Gastrocnemius medialis (tissue), 4 donors: ENCODE measurements at regions of chr7 and their contacts with region 1.

Region 1: DNA sequence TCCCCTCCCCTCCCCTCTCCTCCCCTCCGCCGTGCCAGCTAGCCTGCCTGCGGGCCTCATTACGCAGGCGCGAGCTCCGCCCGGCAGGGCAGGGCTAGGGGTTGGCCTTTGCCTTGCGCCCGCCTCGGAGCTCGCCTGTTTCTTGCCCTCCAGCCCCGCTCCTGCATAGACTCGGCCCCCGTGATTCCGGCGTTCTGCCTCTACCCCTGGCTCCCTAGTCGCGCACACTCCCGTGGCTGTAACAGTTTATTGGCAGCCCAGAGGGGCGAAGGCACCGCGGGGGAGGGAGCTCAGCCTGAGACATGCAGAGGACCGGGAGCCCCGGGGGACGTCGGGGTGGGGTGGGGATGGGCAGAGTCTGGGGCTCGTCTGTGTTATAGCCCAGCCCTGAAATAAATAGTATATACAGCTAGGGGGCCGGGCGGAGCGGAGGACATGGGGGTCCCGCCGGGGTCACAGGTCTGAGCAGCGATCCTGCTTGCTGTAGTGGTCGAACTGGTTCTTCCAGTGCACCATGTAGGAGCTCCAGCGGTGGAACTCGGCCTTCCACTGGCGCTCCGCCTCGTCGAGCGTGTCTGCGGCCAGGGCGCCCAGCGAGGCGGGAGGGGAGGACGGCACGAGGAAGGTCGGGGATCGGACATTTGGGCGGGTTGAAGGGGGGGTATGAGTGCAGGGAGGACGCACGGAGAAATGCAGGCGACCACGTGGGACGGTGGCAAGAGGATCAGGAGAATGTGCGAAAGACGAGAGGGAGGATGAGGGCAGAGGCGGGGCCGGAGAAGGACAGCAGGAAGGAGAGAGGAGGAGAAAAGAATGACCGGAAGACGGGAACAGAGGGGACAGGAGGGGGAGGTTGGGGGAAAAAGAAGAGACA is 483 bp upstream of the UFSP1 start:
- DNase-seq: peak; percentile 92
- ATAC-seq: peak; percentile 78 to 82
- H3K4me3 ChIP-seq: peak overlapping the region; percentile 69 to 89 (median 85)
- H3K27ac ChIP-seq: peak overlapping the region; percentile 95 to 99 (median 97)
- H3K4me1 ChIP-seq: peaks cover 28 to 49% of the 10 kb centered on the region in 2 donors
- H3K27me3 ChIP-seq: peaks cover 0 to under 1% (median 0%) of the 10 kb centered on the region in 3 donors
- CTCF ChIP-seq: peak in 1 of 5 experiments; percentile 10
- POLR2A ChIP-seq: peak; percentile 75 to 76

Region 2: DNA sequence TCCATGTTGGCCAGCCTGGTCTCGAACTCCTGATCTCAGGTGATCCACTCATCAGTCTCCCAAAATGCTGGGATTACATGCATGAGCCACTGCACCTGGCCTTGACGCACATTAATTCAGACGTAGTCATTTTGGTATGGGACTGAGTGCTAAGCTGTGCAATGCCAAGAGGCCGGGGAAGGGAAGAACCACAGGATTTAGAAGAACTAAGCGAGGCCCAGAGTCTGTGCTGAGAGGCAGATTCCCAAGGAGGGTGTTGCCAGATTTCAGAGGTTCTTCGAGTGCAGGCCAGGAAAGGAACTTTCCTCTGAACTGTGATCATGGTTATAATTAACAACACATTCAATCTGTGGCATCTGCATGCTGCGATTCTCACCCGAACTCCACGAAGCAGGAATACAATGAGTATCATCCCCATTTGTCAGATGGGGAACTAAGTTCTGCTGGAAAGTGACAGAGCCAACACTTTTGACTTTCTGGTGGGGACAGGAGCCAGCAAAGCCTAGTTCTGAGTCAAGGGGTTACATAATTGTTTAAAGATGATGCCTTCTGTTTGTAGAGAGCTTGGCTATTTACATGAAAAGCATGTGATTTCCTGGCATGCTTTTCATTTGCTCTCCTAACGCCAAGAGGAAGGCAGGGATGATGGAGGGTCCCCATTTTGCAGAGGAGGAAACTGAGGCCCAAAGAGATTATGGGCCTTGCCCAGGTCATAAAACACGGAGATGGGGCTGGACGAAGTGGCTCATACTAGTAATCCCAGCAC is 162.8 kb before region 1 on chr7:
- in situ Hi-C with region 1: no loop called
- intact Hi-C with region 1: no loop called
- DNase-seq: no peak
- ATAC-seq: no peak
- H3K4me3 ChIP-seq: no peak overlapping the region
- H3K27ac ChIP-seq: no peak overlapping the region
- H3K4me1 ChIP-seq: no peaks in the 10 kb centered on the region
- H3K27me3 ChIP-seq: peaks cover 0 to 7% (median 4%) of the 10 kb centered on the region in 3 donors
- CTCF ChIP-seq: no peak
- POLR2A ChIP-seq: no peak

Region 3: GRCh38 chr7:101085162-101085987 is 195.4 kb after region 1 on chr7 and contains the start of gene TRIM56:
- in situ Hi-C with region 1: no loop called
- intact Hi-C with region 1: loop called (anchors 2 kb)
- DNase-seq: peak; percentile 76 to 91
- ATAC-seq: peak; percentile 93 to 94
- H3K4me3 ChIP-seq: peak within 1 kb of the TSS; percentile 74 to 87 (median 76)
- H3K27ac ChIP-seq: peak within 1 kb of the TSS; percentile 90 to 94 (median 91)
- H3K4me1 ChIP-seq: peaks cover 15 to 18% of the 10 kb centered on the region in 2 donors
- H3K27me3 ChIP-seq: no peaks in the 10 kb centered on the region
- CTCF ChIP-seq: no peak
- POLR2A ChIP-seq: peak in 1 of 2 donors; percentile 59
- total RNA-seq, gene TRIM56: 4.2 to 11.4 (median 6.9) TPM

Region 4: DNA sequence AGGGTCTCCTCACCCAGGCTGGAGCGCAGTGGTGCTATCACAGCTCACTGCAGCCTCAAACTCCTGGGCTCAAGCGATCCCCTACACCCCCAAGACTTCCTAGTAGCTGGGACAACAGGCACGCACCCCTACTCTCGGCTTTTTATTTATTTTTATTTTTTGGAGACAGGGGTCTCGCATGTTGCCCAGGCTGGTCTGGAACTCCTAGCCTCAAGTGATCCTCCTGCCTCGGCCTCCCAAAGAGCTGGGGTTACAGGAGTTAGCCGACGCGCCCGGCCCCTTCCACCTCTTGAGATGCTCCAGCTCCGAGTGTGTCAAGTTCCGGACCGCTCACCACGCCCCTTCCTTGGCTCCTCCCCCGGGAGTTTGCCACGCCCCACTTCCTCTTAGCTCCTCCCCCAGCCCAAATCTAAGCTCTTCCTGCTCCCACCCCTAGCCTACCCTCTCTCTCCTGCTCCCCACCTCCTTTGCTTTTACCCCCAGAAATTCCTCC is 283.8 kb after region 1 on chr7:
- in situ Hi-C with region 1: no loop called
- intact Hi-C with region 1: no loop called
- DNase-seq: no peak
- ATAC-seq: no peak
- H3K4me3 ChIP-seq: peak overlapping the region in 3 of 4 donors; percentile 30 to 46 (median 35)
- H3K27ac ChIP-seq: no peak overlapping the region
- H3K4me1 ChIP-seq: peaks cover 14 to 31% of the 10 kb centered on the region in 2 donors
- H3K27me3 ChIP-seq: peaks cover 91 to 100% (median 98%) of the 10 kb centered on the region in 3 donors
- CTCF ChIP-seq: no peak
- POLR2A ChIP-seq: no peak